ENCODE measurements at regions of chr1 and their contacts with region 1.

Region 1: GRCh38 chr1:30718636-30719405 is 4.6 kb downstream of the MATN1 start:
- DNase-seq: peak; percentile 87
- ATAC-seq: peak; percentile 66
- H3K4me3 Mint-ChIP-seq: peak overlapping the region; percentile 87
- H3K27ac Mint-ChIP-seq: peak overlapping the region; percentile 91
- H3K4me1 Mint-ChIP-seq: peaks cover 42% of the 10 kb centered on the region
- H3K27me3 Mint-ChIP-seq: no peaks in the 10 kb centered on the region
- CTCF ChIP-seq: peak; percentile 92

Region 2: DNA sequence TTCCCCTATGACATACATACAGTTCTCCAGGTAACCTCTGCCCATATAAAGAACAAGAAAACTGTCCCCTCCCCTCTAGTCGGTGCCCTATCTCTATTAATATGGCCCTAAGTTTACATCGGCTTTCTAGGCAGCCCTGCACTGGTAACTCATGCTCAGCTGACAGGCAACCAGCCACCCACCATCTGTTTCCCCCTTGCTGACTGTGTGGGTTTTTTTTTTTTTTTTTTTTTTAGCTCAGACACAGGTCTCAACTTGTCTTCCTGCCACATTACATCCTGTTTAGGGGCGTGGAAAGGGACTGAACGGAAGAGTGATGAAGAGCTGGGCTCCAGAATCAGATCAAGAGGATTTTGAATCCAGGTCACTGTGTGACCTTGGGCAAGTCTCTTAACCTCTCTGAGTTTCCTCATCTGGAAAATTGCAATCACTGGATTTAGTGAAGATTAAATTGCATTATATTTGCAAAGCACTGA is 24.8 kb after region 1 on chr1:
- CTCF ChIA-PET with region 1: interaction called, 19 read pairs
- POLR2A ChIA-PET with region 1: interaction called, 662 read pairs
- intact Hi-C with region 1: no loop called
- DNase-seq: no peak
- ATAC-seq: peak; percentile 72
- H3K4me3 Mint-ChIP-seq: peak overlapping the region; percentile 72
- H3K27ac Mint-ChIP-seq: peak overlapping the region; percentile 96
- H3K4me1 Mint-ChIP-seq: peaks cover 99% of the 10 kb centered on the region
- H3K27me3 Mint-ChIP-seq: no peaks in the 10 kb centered on the region
- CTCF ChIP-seq: no peak

Region 3: GRCh38 chr1:30763651-30764248 is 44.9 kb after region 1 on chr1:
- CTCF ChIA-PET with region 1: interaction called, 26 read pairs
- POLR2A ChIA-PET with region 1: interaction called, 662 read pairs
- intact Hi-C with region 1: no loop called
- DNase-seq: no peak
- ATAC-seq: no peak
- H3K4me3 Mint-ChIP-seq: no peak overlapping the region
- H3K27ac Mint-ChIP-seq: peak overlapping the region; percentile 80
- H3K4me1 Mint-ChIP-seq: peaks cover 76% of the 10 kb centered on the region
- H3K27me3 Mint-ChIP-seq: no peaks in the 10 kb centered on the region
- CTCF ChIP-seq: no peak

Region 4: DNA sequence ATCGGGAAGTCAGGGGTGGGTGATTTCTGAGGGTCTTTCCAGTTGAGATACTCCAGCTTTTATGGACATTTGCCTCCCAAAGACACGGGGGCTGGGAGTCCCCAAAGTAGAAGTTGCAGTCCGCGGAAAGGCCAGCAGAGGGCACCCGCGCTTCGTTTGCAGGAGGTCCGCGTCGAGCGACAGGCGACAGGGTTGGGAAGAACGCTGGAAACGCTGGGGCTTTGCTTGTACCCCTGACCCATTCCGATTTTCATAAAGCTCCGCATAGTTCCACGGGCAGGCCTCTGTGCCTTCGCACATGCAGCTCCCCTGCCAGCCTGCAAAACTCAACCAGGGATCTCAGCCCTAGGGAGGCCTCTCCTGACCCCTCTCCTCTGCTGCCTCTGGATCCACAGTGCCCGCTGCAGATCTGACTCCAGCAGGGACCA is 83.0 kb after region 1 on chr1:
- CTCF ChIA-PET with region 1: interaction called, 35 read pairs
- POLR2A ChIA-PET with region 1: interaction called, 3 read pairs
- intact Hi-C with region 1: loop called (anchors 1 kb)
- DNase-seq: peak; percentile 83
- ATAC-seq: peak; percentile 74
- H3K4me3 Mint-ChIP-seq: no peak overlapping the region
- H3K27ac Mint-ChIP-seq: no peak overlapping the region
- H3K4me1 Mint-ChIP-seq: peaks cover 19% of the 10 kb centered on the region
- H3K27me3 Mint-ChIP-seq: peaks cover 14% of the 10 kb centered on the region
- CTCF ChIP-seq: peak; percentile 64

Region 5: GRCh38 chr1:31065310-31066217 is 346.7 kb after region 1 on chr1 and contains the start of gene PUM1:
- CTCF ChIA-PET with region 1: no interaction called
- POLR2A ChIA-PET with region 1: no interaction called
- intact Hi-C with region 1: loop called (anchors 1 kb)
- DNase-seq: peak; percentile 97
- ATAC-seq: peak; percentile 94
- H3K4me3 Mint-ChIP-seq: peak within 1 kb of the TSS; percentile 99
- H3K27ac Mint-ChIP-seq: peak within 1 kb of the TSS; percentile 98
- H3K4me1 Mint-ChIP-seq: peaks cover 37% of the 10 kb centered on the region
- H3K27me3 Mint-ChIP-seq: no peaks in the 10 kb centered on the region
- CTCF ChIP-seq: no peak
- total RNA-seq, gene PUM1: 132 and 137 TPM in 2 replicates

Region 6: DNA sequence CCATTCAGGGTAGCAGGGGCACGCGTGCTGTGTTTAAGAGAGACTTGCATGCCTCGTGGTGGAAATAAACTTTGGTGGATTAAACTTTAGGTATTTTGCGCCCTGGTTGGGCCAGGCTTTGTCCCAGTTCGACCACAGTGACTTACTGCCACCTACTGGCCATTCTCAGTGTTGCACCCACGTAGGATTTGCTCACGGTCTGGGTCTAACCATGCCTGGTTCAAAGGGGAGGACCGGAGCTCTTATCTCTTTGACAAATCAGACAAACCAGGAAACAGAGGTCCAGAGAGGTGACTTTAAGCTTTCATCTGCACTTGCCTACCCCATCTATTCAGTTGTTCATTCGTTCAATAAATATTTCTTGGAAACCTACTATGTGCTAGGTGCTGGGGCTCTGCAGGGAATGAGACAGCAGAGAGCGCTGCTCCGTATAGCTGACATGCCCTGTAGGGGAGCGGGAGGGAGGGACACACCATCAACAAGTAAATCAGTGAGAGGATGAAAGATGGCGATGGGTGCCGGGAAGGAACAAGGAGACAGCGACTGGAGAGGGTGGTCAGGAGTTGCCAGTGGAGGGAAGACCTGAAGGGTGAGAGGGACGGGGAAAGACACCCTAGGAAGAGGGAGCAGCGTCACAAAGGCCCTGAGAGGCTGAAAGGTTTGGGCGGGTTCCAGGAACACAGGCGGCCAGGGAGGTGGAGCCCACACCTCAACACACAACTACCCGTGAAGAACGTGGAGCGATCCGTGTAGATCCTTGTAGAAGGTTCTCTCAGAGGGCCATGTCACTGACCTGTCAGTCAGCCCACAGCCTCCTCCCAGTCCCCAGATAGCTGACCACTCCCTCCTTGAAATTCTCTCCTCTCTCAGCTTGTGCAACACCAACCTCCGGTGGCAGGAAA is 830.3 kb after region 1 on chr1:
- CTCF ChIA-PET with region 1: interaction called, 5 read pairs
- POLR2A ChIA-PET with region 1: no interaction called
- intact Hi-C with region 1: loop called (anchors 10 kb)
- DNase-seq: peak; percentile 79
- ATAC-seq: peak; percentile 98
- H3K4me3 Mint-ChIP-seq: peak overlapping the region; percentile 17
- H3K27ac Mint-ChIP-seq: no peak overlapping the region
- H3K4me1 Mint-ChIP-seq: peaks cover 11% of the 10 kb centered on the region
- H3K27me3 Mint-ChIP-seq: peaks cover 6% of the 10 kb centered on the region
- CTCF ChIP-seq: peak; percentile 53